ENCODE measurements at regions of chrX and their contacts with region 1.

Region 1: DNA sequence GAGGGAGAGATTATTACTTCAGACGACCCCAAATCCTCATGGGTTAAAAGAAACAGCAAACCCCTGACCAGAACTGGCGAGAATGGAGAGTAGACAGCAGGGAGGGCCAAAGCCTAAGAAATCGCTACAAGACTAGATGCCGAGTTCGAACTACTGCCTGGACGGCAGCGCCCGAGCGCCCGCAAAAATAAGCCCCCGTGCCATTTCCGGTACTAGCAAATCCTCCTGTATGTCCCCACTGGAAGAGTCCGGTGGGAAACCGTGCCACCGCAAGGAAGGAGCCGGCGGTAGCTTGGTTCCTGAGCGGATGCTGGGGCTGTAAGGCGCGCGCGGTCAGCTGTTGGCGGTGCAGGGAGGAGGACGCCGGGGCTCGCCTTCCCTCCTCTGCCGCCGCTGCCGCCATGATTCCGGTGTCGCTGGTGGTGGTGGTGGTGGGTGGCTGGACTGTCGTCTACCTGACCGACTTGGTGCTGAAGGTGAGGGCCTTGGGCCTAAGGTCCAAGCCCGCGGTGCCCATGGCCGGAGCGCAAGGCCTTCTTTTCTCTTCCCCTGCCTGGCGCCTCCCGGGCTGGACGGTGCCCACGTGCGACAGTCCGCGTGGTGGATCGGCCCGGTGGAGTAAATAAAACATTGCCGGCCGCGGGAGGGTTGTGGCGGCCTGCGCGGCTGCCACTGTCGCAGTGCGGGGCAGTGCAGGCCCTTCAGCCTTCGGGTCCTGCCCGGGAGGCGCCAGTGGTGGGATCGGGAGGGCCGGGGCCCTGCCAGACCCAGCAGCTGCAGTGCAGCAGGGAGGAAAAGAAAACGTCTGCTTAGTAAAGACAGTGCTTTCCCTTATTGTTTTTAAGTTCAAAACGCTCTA is at the start of gene MBTPS2:
- DNase-seq: peak; percentile 85
- ATAC-seq: peak; percentile 93
- total RNA-seq, gene MBTPS2: 8.6 TPM

Region 2: GRCh38 chrX:21764040-21764439 is 75.5 kb before region 1 on chrX:
- intact Hi-C with region 1: loop called (anchors 5 kb)
- DNase-seq: no peak
- ATAC-seq: no peak

Region 3: GRCh38 chrX:21798677-21799219 is 40.8 kb before region 1 on chrX:
- intact Hi-C with region 1: no loop called
- DNase-seq: no peak
- ATAC-seq: peak; percentile 75

Region 4: GRCh38 chrX:21972721-21973120 is 133.2 kb after region 1 on chrX:
- intact Hi-C with region 1: loop called (anchors 10 kb)
- DNase-seq: no peak
- ATAC-seq: peak; percentile 78

Region 5: DNA sequence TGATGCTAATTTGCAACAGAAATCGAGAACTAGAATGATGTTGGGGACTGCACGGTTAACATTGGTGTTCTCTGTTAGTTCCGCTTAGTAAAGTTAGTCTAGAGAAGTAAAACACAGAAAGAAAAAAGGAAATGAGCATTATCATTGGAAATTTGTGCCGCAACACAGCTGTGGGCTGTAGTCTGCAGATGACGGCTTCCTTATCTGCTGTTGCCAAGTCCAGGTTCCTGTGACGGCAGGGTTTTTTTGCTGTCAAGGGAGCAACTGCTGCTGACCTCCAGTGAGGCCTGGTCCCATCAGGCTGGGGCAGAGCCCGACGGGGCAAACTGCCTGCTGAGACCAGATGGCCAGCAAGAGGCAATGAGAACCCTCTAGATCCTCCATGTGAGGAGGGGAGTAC is 153.7 kb after region 1 on chrX:
- intact Hi-C with region 1: no loop called
- DNase-seq: peak; percentile 55
- ATAC-seq: peak; percentile 61